Right ventricle myocardium inferior (tissue), 1 donor: ENCODE measurements at regions of chr6 and their contacts with region 1.

Region 1: DNA sequence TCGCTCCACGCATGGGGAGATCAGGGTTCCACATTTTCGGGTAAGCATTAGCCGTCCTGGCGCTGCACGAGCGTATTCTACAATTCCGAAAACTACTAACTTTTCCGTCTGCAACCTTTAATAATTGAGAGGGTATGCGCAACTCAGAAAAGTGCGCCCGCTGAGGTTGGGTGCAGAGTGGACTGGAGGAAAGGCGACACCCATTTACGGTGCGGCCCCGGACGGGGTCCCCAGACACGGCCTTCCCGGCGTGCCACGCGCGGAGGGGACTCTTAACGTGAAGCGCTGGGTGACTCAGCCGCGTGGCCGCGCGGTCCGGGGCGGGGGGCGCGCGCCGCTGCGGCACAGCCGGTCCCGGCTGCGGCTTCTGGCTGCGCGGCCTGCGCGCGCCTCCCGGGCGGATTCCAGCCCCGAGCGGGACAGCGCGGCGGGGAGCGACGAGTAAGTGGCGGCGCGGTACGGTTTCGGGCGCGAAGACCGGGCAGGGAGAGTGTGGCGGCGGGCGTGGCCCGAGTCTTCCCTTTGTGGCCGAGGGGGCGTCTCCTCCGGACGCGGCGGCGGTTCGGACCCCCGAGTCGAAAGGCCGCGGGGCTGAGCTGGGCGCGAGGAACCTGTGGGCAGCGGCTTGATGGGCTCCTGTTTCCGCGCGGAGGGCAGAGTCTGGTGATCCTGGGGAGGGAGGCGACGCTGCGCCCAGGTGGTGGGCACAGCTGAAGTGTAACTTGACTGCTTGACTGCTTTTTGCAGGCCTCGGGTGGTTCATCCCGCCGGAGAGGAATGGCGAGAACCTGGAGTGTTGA is at the starts of genes KCTD20 and PXT1:
- DNase-seq: peak; percentile 96
- ATAC-seq: peak; percentile 92
- total RNA-seq, gene KCTD20: 26.4 TPM
- total RNA-seq, gene PXT1: not detected

Region 2: DNA sequence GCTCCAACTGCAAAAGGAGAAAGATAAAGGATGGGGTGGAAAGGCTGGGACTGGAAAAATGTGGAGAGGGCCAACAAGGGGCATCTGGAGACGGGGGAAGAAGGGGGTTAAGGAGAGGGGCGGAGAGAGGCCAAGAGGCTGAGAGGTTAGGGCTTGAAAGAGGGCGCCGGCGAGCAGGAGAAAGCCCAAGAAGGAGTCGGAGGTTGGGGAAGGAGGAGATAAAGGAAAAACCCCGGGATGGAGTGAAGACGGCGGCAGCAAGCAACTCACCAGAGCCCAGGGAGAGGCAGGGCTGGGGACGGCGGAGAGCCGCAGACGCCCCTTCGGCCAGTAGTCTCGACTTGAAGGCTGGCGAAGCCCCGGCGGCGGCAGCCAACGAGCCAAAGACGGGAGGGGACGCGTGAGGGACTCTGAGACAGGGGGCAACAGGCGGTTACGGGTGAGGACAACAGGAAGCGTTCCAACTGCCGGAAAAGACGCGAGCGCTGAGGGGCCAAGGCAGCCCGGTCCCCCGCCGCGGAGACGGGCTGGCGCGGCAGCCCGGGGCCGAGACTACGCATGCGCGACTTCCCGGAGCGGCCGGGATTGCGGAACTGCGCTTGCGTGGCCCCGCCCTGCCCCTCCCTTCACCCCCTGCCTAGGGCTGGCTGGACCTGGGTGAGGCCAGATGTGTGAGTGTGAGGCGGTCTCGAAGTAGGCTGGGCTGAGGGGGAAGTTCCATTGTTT is 104.2 kb after region 1 on chr6 and contains the start of gene STK38:
- intact Hi-C with region 1: loop called (anchors 2 kb)
- DNase-seq: peak; percentile 94
- ATAC-seq: peak; percentile 98
- total RNA-seq, gene STK38: 22.6 TPM

Region 3: GRCh38 chr6:36594029-36594815 is 151.4 kb after region 1 on chr6 and contains the start of gene SRSF3:
- intact Hi-C with region 1: loop called (anchors 5 kb)
- DNase-seq: peak; percentile 97
- ATAC-seq: peak; percentile 98
- total RNA-seq, gene SRSF3: 119 TPM